ENCODE measurements at regions of chr1 and their contacts with region 1.

Region 1: GRCh38 chr1:235866913-235867845 is 473 bp upstream of the LYST start:
- DNase-seq: peak; percentile 99
- ATAC-seq: peak; percentile 76
- H3K4me3 Mint-ChIP-seq: peak overlapping the region; percentile 96
- H3K27ac Mint-ChIP-seq: peak overlapping the region; percentile 97
- H3K4me1 Mint-ChIP-seq: peaks cover 45% of the 10 kb centered on the region
- H3K27me3 Mint-ChIP-seq: no peaks in the 10 kb centered on the region

Region 2: GRCh38 chr1:235855811-235856429 is 11.3 kb before region 1 on chr1:
- CTCF ChIA-PET with region 1: interaction called, 10 read pairs
- POLR2A ChIA-PET with region 1: interaction called, 16 read pairs
- intact Hi-C with region 1: loop called (anchors 1 kb)
- DNase-seq: no peak
- ATAC-seq: peak; percentile 62
- H3K4me3 Mint-ChIP-seq: no peak overlapping the region
- H3K27ac Mint-ChIP-seq: peak overlapping the region; percentile 84
- H3K4me1 Mint-ChIP-seq: peaks cover 54% of the 10 kb centered on the region
- H3K27me3 Mint-ChIP-seq: no peaks in the 10 kb centered on the region

Region 3: GRCh38 chr1:235888119-235888643 is 21.0 kb after region 1 on chr1:
- CTCF ChIA-PET with region 1: interaction called, 4 read pairs
- POLR2A ChIA-PET with region 1: interaction called, 7 read pairs
- intact Hi-C with region 1: loop called in 1 of 2 experiments (anchors 1 kb)
- DNase-seq: peak; percentile 78
- ATAC-seq: peak; percentile 88
- H3K4me3 Mint-ChIP-seq: peak overlapping the region; percentile 6
- H3K27ac Mint-ChIP-seq: peak overlapping the region; percentile 84
- H3K4me1 Mint-ChIP-seq: peaks cover 41% of the 10 kb centered on the region
- H3K27me3 Mint-ChIP-seq: no peaks in the 10 kb centered on the region

Region 4: DNA sequence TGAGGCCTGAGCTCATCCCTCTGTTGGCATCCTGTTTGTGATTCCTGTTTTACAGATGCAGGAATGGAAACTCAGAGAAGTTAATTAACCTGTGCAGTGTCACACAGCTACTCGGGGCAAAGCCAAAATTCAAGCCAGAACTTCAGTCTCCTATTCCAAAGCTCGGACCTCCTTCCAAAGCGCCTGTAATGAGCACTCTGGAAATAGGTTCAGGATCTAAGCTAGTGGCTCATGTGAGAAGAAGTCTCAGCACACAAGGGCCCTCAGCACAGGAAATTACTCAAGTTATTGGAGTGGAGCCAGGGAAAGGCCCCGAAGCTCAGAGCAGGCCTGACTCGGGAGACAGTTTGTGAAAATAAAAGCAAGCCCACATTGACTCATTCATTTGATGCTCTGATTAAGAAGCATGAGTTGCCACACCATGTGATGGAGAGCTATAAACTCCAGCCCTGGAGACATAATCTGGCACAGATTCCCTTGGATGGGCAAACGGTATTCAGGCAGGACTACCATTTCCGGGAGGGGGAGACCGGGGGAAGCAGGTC is 50.2 kb after region 1 on chr1:
- CTCF ChIA-PET with region 1: interaction called, 5 read pairs
- POLR2A ChIA-PET with region 1: interaction called, 5 read pairs
- intact Hi-C with region 1: loop called in 1 of 2 experiments (anchors 2 kb)
- DNase-seq: peak; percentile 84
- ATAC-seq: peak; percentile 97
- H3K4me3 Mint-ChIP-seq: peak overlapping the region; percentile 2
- H3K27ac Mint-ChIP-seq: peak overlapping the region; percentile 75
- H3K4me1 Mint-ChIP-seq: peaks cover 34% of the 10 kb centered on the region
- H3K27me3 Mint-ChIP-seq: no peaks in the 10 kb centered on the region

Region 5: GRCh38 chr1:235999259-235999925 is 132.2 kb after region 1 on chr1:
- CTCF ChIA-PET with region 1: no interaction called
- POLR2A ChIA-PET with region 1: no interaction called
- intact Hi-C with region 1: loop called in 1 of 2 experiments (anchors 2 kb)
- DNase-seq: peak; percentile 76
- ATAC-seq: peak; percentile 85
- H3K4me3 Mint-ChIP-seq: peak overlapping the region; percentile 32
- H3K27ac Mint-ChIP-seq: peak overlapping the region; percentile 94
- H3K4me1 Mint-ChIP-seq: peaks cover 58% of the 10 kb centered on the region
- H3K27me3 Mint-ChIP-seq: no peaks in the 10 kb centered on the region

Region 6: GRCh38 chr1:236523701-236524141 is 656.5 kb after region 1 on chr1 and contains the start of gene LGALS8:
- CTCF ChIA-PET with region 1: no interaction called
- POLR2A ChIA-PET with region 1: no interaction called
- intact Hi-C with region 1: loop called in 1 of 2 experiments (anchors 5 kb)
- DNase-seq: peak; percentile 94
- ATAC-seq: peak; percentile 79
- H3K4me3 Mint-ChIP-seq: peak within 1 kb of the TSS; percentile 99
- H3K27ac Mint-ChIP-seq: peak within 1 kb of the TSS; percentile 98
- H3K4me1 Mint-ChIP-seq: peaks cover 25% of the 10 kb centered on the region
- H3K27me3 Mint-ChIP-seq: no peaks in the 10 kb centered on the region
- total RNA-seq, gene LGALS8: 106 to 155 TPM

Measured in activated CD4-positive, alpha-beta T cell treated with anti-CD3 and anti-CD28 coated beads for 36 hours (primary cell).